ENCODE measurements at regions of chr2 and their contacts with region 1.

Region 1: GRCh38 chr2:115880558-115880957 is 1438.1 kb downstream of the DPP10 start:
- DNase-seq: no peak
- H3K4me3 ChIP-seq: no peak overlapping the region
- H3K27ac ChIP-seq: no peak overlapping the region
- H3K4me1 ChIP-seq: no peaks in the 10 kb centered on the region
- H3K27me3 ChIP-seq: no peaks in the 10 kb centered on the region
- CTCF ChIP-seq: no peak
- POLR2A ChIP-seq: no peak

Region 2: GRCh38 chr2:115921541-115921940 is 41.0 kb after region 1 on chr2:
- intact Hi-C with region 1: loop called (anchors 2 kb)
- DNase-seq: no peak
- H3K4me3 ChIP-seq: no peak overlapping the region
- H3K27ac ChIP-seq: no peak overlapping the region
- H3K4me1 ChIP-seq: no peaks in the 10 kb centered on the region
- H3K27me3 ChIP-seq: no peaks in the 10 kb centered on the region
- CTCF ChIP-seq: no peak
- POLR2A ChIP-seq: no peak

Measured in breast epithelium (tissue), 4 donors.